ENCODE measurements at regions of chr14 and their contacts with region 1.

Region 1: GRCh38 chr14:69043596-69044260 is 64.6 kb upstream of the ACTN1 start:
- DNase-seq: peak; percentile 45 to 87
- H3K4me3 ChIP-seq: no peak overlapping the region
- H3K27ac ChIP-seq: peak overlapping the region; percentile 92 to 95
- H3K4me1 ChIP-seq: peaks cover 34 to 78% of the 10 kb centered on the region in 2 donors
- H3K27me3 ChIP-seq: no peaks in the 10 kb centered on the region
- CTCF ChIP-seq: no peak

Region 2: DNA sequence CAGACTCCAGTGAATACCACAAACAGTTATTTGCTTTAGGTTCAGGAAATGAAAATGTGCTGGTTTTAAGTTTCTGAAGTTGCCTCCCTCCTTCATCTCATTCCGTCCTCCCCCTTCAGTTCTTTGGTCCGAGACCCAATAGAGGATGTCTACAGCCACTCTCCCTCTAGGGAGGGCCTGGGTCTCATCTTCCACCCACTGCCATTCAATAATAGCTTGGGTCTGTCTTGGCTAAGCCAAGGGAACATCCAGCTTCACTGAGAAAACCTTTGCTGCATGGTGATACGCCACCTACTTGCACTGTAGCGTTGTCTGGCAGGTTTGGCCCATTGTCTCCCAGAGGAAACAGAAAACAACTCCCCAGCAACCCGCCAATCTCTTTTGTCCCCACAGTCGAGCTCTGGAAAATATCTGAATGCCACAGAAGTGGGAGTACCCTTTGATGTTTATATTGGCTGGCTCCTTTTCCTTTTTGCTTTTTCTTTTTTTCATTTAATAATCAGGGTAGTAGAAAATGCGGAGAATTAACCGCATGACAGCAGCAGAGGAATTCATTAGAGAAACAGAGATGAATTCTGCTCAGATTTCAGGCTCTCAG is 844.1 kb before region 1 on chr14:
- intact Hi-C with region 1: no loop called
- DNase-seq: peak in 1 of 2 donors; percentile 71
- H3K4me3 ChIP-seq: peak overlapping the region in 1 of 2 donors; percentile 12
- H3K27ac ChIP-seq: peak overlapping the region; percentile 68 to 80
- H3K4me1 ChIP-seq: peaks cover 8 to 21% of the 10 kb centered on the region in 2 donors
- H3K27me3 ChIP-seq: no peaks in the 10 kb centered on the region
- CTCF ChIP-seq: no peak

Region 3: GRCh38 chr14:68548194-68549056 is 495.3 kb before region 1 on chr14:
- intact Hi-C with region 1: no loop called
- DNase-seq: peak; percentile 70 to 97
- H3K4me3 ChIP-seq: no peak overlapping the region
- H3K27ac ChIP-seq: peak overlapping the region; percentile 96 to 98
- H3K4me1 ChIP-seq: peaks cover 30 to 72% of the 10 kb centered on the region in 2 donors
- H3K27me3 ChIP-seq: no peaks in the 10 kb centered on the region
- CTCF ChIP-seq: no peak

Region 4: GRCh38 chr14:69005432-69006147 is 38.1 kb before region 1 on chr14:
- intact Hi-C with region 1: loop called (anchors 2 kb)
- DNase-seq: peak; percentile 73 to 97
- H3K4me3 ChIP-seq: peak overlapping the region in 1 of 2 donors; percentile 10
- H3K27ac ChIP-seq: peak overlapping the region; percentile 75 to 81
- H3K4me1 ChIP-seq: peaks cover 10 to 31% of the 10 kb centered on the region in 2 donors
- H3K27me3 ChIP-seq: no peaks in the 10 kb centered on the region
- CTCF ChIP-seq: no peak

Region 5: GRCh38 chr14:69079183-69079742 is 35.5 kb after region 1 on chr14:
- intact Hi-C with region 1: loop called (anchors 2 kb)
- DNase-seq: no peak
- H3K4me3 ChIP-seq: no peak overlapping the region
- H3K27ac ChIP-seq: peak overlapping the region; percentile 89 to 90
- H3K4me1 ChIP-seq: peaks cover 9 to 27% of the 10 kb centered on the region in 2 donors
- H3K27me3 ChIP-seq: no peaks in the 10 kb centered on the region
- CTCF ChIP-seq: no peak

Region 6: DNA sequence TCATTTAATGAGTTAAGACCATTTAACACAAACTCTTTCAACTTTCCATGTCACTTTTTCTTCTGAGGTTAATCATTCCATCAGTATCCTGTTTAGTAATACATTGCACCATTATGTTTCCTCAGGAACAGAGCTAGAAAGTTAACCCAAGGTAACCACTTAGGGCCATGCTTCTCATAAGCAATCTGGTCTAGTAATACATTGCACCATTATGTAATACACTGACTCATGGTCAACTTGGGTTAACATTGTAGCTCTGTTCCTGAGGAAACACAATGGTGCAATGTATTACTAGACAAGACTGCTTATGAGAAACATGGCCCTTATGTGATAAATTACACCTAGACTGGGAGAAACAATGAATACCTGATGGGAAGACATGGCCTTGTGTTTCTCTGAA is 332.7 kb after region 1 on chr14:
- intact Hi-C with region 1: no loop called
- DNase-seq: no peak
- H3K4me3 ChIP-seq: no peak overlapping the region
- H3K27ac ChIP-seq: no peak overlapping the region
- H3K4me1 ChIP-seq: no peaks in the 10 kb centered on the region
- H3K27me3 ChIP-seq: no peaks in the 10 kb centered on the region
- CTCF ChIP-seq: no peak

Measured in ascending aorta (tissue), 2 donors.